AG04449 (cell line): ENCODE measurements at regions of chr10 and their contacts with region 1.

Region 1: GRCh38 chr10:102420810-102421644 is at the start of gene FBXL15:
- DNase-seq: peak; percentile 71
- H3K4me3 ChIP-seq: peak within 1 kb of the TSS; percentile 92
- CTCF ChIP-seq: no peak

Region 2: GRCh38 chr10:102040305-102041050 is 380.5 kb before region 1 on chr10:
- CTCF ChIA-PET with region 1: no interaction called
- POLR2A ChIA-PET with region 1: no interaction called
- DNase-seq: no peak
- H3K4me3 ChIP-seq: no peak overlapping the region
- CTCF ChIP-seq: no peak

Region 3: GRCh38 chr10:102167861-102168260 is 253.2 kb before region 1 on chr10:
- CTCF ChIA-PET with region 1: interaction called, 15 read pairs
- POLR2A ChIA-PET with region 1: interaction called, 3 read pairs
- DNase-seq: no peak
- H3K4me3 ChIP-seq: no peak overlapping the region
- CTCF ChIP-seq: no peak

Region 4: DNA sequence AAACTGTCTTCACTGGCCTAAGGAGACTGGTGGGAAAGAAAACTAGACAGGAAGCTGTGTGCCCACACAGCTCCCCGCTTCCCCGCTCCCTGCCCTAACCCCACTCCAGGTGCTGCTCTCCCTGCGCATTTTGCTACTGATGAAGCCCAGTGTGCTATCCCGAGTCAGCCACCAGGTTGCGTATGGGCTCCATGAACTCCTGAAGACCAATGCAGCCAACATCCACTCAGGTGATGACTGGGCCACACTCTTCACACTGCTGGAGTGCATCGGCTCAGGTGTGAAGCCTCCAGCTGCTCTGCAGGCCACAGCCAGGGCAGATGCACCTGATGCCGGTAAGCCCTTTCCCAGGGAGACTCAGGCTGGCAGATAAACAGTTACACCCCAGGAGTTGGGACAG is 45.8 kb before region 1 on chr10:
- CTCF ChIA-PET with region 1: no interaction called
- POLR2A ChIA-PET with region 1: no interaction called
- DNase-seq: no peak
- H3K4me3 ChIP-seq: no peak overlapping the region
- CTCF ChIP-seq: no peak

Region 5: DNA sequence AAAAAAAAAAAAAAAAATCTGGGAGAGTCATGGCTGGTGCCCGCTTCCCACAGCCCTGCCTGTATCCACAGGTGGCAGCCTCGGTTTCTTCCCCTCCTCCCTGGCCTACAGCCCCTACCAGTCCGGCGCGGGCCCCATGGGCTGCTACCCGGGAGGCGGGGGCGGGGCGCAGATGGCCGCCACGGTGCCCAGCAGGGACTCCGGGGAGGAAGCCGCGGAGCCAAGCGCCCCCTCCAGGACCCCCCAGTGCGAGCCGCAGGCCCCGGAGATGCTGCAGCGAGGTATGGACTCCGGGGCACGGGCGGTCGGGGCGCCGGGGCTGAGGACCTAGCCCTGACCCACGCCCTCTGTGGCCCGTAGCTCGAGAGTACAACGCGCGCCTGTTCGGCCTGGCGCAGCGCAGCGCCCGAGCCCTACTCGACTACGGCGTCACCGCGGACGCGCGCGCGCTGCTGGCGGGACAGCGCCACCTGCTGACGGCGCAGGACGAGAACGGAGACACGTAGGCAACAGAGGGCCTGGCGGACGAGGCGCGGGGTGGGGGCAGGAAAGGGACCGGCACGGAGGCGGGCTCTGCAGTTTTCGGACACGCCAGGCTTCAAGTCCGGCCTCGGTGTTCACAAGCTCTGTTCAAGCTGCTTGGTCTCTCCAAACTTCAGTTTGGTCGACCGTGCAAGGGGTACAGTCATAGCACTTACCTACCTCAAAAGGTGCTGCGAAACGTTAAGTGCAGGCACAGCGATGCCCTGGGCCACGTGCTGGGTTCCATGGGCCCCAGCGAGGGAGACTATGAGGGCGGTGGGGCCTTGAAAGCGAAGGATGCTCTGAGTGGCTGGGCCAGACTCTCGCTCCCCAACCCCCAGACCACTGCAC is 21.6 kb before region 1 on chr10:
- CTCF ChIA-PET with region 1: interaction called, 161 read pairs
- POLR2A ChIA-PET with region 1: interaction called, 4 read pairs
- DNase-seq: no peak
- H3K4me3 ChIP-seq: peak overlapping the region; percentile 59
- CTCF ChIP-seq: peak; percentile 97

Region 6: GRCh38 chr10:102408728-102409603 is 12.1 kb before region 1 on chr10:
- CTCF ChIA-PET with region 1: interaction called, 33 read pairs
- POLR2A ChIA-PET with region 1: interaction called, 5 read pairs
- DNase-seq: no peak
- H3K4me3 ChIP-seq: peak overlapping the region; percentile 52
- CTCF ChIP-seq: no peak

Region 7: DNA sequence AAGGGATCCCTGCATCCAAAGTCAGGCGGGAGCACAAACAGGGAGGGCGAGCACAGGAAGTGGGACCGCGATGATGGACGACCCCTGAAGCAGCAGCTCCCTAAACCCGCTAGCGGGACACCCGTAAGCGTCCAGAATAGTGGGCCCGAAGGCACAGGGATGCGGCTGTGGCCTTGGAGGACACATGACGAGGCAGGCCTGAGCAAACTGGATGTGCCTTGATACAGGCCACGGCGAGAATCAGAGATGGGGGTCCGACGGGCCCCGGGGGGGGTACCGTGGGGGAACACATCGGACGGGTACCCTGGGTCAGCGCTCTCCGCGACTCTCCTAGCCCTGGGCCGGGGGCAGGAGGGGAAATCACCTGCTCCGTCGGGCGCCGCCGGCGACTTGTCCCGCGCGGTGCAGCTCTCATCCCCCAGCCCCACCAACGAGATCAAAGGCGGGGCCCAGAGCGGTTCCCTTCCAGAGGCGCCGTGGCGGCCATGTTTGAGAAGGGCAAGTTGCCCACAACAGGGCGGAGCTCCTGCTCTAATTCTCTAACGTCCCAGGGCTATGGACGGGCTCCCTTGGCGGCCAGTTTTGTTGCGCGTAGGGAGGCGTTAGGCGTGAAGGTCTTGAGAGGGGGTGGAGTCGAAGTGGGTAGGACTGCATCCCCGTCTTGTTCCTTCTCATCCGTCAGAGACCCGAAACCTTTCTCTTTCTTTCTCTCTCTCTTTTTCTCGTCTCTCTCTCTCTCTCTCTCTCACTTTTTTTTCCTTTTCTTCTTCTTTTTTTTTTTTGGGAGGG is 11.3 kb after region 1 on chr10 and contains the start of gene CUEDC2:
- CTCF ChIA-PET with region 1: interaction called, 48 read pairs
- POLR2A ChIA-PET with region 1: interaction called, 31 read pairs
- DNase-seq: peak; percentile 61
- H3K4me3 ChIP-seq: peak within 1 kb of the TSS; percentile 90
- CTCF ChIP-seq: no peak

Region 8: DNA sequence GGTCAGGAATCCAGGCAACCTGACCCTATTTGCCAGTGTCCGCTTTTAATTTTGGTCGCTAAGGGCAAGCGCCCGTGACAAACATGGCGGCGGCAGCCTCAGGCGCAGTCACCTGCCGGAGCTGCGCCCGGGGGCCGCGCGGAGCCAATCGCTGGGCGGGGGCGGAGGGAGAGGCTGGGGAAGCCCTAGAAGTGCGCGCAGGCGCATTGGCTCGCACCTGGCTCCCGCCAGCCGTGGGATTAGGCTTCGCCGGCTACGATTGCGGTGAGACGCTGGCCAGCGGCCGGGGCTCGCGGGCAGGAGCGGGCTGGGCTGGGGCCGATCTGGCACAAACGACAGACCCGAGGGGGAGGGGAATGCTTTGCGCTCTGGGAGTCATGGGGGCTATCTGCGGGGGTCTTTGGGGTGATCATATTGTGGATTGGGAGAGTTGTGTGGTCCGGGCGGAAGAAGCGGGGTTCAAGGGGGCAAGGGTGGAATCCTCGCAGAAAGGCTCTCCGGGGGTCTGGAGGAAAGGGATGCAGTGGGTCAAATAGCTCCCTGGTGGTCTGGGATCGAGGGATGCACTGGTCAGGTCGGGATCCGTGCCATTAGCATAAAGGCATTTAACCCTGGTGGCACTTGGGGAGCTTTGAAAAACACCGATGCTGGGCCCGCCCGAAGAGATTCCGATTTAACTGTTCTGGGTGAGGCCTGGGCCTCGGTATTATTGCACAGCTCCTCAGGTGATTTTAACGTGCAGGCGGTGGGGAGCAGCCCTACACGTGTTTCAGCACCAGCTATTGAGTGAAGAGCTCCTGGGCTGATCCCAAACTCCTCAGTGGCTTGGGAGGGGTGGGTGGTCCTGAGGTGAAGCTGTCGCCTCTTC is 40.4 kb after region 1 on chr10:
- CTCF ChIA-PET with region 1: interaction called, 15 read pairs
- POLR2A ChIA-PET with region 1: no interaction called
- DNase-seq: peak; percentile 4
- H3K4me3 ChIP-seq: peak overlapping the region; percentile 62
- CTCF ChIP-seq: no peak

Region 9: DNA sequence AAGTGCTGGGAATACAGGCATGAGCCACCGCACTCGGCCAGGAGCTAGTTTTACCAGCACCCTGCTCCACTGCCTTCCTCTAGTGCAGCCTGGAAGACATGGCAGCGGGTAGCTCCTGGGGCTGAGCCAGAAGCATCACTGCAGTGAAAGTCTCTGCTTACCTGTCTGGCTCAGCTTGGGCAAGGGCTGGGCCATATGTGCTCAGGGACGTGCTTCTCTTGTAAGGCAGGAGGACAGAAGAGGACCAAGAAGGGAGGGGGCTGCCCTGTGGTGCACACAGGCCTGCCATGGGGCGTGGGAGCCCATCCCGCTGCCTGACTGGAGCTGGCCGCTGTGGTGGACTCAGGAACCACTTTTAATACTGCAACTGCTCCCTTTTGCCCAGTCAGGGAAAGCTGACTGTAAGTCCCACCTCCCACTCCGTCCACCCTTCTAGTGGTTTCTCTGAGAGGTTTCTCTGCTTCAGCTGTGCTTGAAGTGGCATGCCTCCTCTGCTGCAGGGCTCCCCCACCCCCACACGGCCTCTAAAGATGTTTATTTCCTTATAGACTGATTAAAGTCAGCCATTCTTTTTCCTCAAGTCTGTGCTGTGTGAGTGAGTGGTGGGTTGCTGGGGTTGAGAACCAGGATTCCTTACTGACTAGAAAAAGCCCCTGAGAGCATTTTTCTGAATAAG is 55.6 kb after region 1 on chr10:
- CTCF ChIA-PET with region 1: interaction called, 35 read pairs
- POLR2A ChIA-PET with region 1: no interaction called
- DNase-seq: no peak
- H3K4me3 ChIP-seq: no peak overlapping the region
- CTCF ChIP-seq: no peak